Mammary epithelial cell (primary cell): ENCODE measurements at regions of chr1 and their contacts with region 1.

Region 1: DNA sequence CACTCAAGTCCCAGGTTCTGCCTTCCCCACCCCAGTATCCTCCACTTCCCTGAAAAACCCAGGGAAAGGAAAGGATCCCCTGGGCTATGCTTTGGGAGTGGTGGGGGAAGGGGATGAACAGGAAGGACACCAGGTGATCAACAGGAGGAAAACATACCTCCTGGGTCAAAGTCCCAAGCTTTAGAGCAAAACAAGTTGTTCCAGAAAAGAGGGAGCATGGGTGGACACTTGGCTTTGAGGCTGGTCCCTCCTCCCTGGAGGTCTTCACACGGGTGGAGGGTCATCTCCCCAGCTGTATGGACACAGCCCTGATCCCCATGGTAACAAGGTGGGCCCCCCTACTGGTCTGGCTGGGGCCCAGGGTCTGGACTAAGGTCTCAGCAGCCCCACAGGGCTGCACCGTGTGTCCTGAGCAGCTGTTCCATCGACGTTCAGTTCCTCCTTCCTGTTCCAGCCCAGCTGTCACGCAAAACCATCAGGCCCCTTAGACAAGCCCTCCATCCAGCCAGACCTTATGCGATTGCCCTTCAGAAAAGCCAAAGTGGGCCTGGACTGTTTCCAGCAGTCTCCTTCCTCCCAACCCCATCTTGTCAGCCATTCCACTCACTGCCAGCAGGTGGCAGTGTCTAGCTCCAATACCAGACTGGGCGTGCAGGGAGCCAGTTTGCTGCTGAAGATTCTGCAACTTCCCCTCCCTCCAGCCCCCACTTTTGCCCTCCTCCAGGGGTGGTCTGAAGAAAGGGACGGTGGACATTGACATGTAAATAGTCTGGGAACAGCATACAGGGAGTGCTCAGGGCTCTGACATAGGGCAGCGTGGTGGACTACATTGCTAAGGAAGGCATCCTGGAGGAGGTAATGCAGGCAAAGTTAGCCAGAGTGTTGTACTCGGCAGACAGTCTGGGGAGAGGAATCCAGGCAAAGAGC is 2.9 kb upstream of the PDZK1IP1 start:
- DNase-seq: peak; percentile 47
- H3K4me3 ChIP-seq: no peak overlapping the region
- H3K27ac ChIP-seq: no peak overlapping the region
- H3K4me1 ChIP-seq: peaks cover 22% of the 10 kb centered on the region
- H3K27me3 ChIP-seq: no peaks in the 10 kb centered on the region
- CTCF ChIP-seq: peak; percentile 97 to 98

Region 2: DNA sequence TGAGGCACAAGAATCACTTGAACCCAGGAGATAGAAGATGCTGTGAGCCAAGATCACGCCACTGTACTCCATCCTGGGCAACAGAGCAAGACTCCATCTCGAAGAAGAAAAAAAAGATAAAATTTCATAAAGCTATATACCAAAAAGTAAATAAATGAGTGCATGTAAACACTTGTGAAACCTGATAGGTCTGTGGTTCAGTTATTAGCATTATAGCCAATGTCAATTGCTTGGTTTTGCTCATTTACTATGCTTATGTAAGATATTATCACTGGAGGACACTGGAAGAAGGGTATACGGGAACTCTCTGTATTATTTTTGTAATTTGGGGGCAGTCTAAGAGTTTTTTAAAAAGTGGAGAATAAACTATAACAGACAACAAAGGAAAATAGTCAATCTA is 57.0 kb after region 1 on chr1:
- CTCF ChIA-PET with region 1: no interaction called
- dilution Hi-C with region 1: loop called (anchors 5 kb)
- in situ Hi-C with region 1: no loop called
- intact Hi-C with region 1: no loop called
- DNase-seq: no peak
- H3K4me3 ChIP-seq: no peak overlapping the region
- H3K27ac ChIP-seq: no peak overlapping the region
- H3K4me1 ChIP-seq: peaks cover 11% of the 10 kb centered on the region
- H3K27me3 ChIP-seq: peaks cover 3% of the 10 kb centered on the region
- CTCF ChIP-seq: no peak

Region 3: DNA sequence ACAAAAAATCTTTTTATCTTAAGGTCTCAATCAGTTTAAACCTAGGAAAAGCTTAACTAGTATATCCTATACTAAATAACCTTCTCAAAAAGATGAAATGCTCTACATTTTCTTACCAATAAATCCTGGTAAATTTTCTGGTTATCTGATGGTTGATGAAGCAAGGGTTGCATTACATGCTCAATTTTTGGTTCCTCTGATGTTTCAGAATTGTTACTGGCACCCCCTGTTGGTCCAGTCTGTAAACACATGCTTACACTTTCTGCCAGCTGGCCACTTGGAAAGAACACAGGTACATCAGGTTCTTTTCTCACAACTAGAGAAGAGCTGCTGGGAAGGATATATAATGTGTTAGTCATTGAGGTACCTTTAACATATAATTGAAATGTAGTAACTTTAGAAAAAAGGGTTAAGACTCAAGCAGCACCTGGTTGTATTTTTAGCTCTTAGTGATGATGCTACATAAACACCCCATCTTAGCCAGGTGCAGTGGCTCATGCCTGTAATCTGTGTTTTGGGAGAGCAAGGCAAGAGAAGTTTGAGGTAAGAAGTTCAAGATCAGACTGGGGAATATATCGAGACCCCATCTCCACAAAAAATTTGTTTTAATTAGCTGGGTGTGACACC is 70.2 kb after region 1 on chr1:
- CTCF ChIA-PET with region 1: no interaction called
- dilution Hi-C with region 1: no loop called
- in situ Hi-C with region 1: loop called in 1 of 2 experiments (anchors 5 kb)
- intact Hi-C with region 1: loop called (anchors 1 kb)
- DNase-seq: peak; percentile 52
- H3K4me3 ChIP-seq: no peak overlapping the region
- H3K27ac ChIP-seq: no peak overlapping the region
- H3K4me1 ChIP-seq: no peaks in the 10 kb centered on the region
- H3K27me3 ChIP-seq: no peaks in the 10 kb centered on the region
- CTCF ChIP-seq: peak; percentile 74 to 77

Region 4: GRCh38 chr1:47313915-47314664 is 121.4 kb after region 1 on chr1 and contains the start of gene STIL:
- CTCF ChIA-PET with region 1: no interaction called
- dilution Hi-C with region 1: no loop called
- in situ Hi-C with region 1: no loop called
- intact Hi-C with region 1: loop called (anchors 5 kb)
- DNase-seq: peak; percentile 100
- H3K4me3 ChIP-seq: peak within 1 kb of the TSS; percentile 85 to 95 (median 90)
- H3K27ac ChIP-seq: peak within 1 kb of the TSS; percentile 95
- H3K4me1 ChIP-seq: peaks cover 3% of the 10 kb centered on the region
- H3K27me3 ChIP-seq: no peaks in the 10 kb centered on the region
- CTCF ChIP-seq: peak in 1 of 2 donors; percentile 1
- total RNA-seq, gene STIL: 8.0 to 17.9 TPM